Heart left ventricle (tissue), 16 donors: ENCODE measurements at regions of chr9 and their contacts with region 1.

Region 1: DNA sequence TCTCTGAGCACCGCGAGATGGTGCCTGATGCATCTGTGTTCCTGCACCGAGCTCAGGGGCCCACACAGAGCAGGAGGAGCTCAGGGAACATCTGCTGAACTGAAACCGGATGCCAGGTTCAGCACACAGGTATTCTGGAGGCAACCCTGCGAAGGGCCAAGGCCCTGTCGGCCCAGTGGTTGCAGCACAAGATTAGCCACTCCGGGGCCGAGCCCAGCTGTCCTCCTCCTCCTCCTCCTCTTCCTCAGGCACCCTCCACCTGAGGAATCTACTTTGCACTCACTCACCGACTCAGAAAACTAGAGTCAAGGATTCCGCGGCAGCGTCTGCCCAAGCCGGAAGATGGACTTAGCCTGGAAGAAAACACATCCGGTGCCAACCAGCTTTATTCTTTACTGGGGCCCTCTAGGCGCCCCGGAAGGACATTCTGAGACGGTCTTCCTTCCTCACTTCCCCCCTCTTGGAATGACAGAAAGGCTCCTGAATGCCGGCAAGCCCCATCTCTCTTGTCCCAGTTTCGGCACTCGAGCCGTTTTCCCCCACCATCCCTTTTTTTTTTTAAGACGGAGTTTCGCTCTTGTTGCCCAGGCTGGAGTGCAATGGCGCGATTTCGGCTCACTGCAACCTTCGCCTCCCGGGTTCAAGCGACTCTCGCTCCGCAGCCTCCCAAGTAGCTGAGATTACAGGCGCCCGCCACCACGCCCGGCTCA is at the start of gene ZBTB6:
- DNase-seq: peak; percentile 66 to 83 (median 78)
- ATAC-seq: peak; percentile 94 to 99 (median 98)
- H3K4me3 ChIP-seq: peak within 1 kb of the TSS; percentile 49 to 94 (median 84)
- H3K27ac ChIP-seq: peak within 1 kb of the TSS in 11 of 12 donors; percentile 75 to 94 (median 80)
- H3K4me1 ChIP-seq: peaks cover 0 to 16% (median 8%) of the 10 kb centered on the region in 12 donors
- H3K27me3 ChIP-seq: no peaks in the 10 kb centered on the region
- CTCF ChIP-seq: no peak
- POLR2A ChIP-seq: peak in 1 of 2 donors; percentile 37
- total RNA-seq, gene ZBTB6: 5.1 to 8.1 (median 6.3) TPM

Region 2: GRCh38 chr9:122931226-122932121 is 18.4 kb after region 1 on chr9 and contains the start of gene ZBTB26:
- intact Hi-C with region 1: loop called in 1 of 10 experiments (anchors 1 kb)
- DNase-seq: peak; percentile 94 to 97 (median 96)
- ATAC-seq: peak; percentile 99
- H3K4me3 ChIP-seq: peak within 1 kb of the TSS; percentile 63 to 99 (median 80)
- H3K27ac ChIP-seq: peak within 1 kb of the TSS; percentile 70 to 94 (median 90)
- H3K4me1 ChIP-seq: peaks cover 3 to 42% (median 32%) of the 10 kb centered on the region in 12 donors
- H3K27me3 ChIP-seq: no peaks in the 10 kb centered on the region
- CTCF ChIP-seq: no peak
- POLR2A ChIP-seq: peak in 1 of 2 donors; percentile 71
- total RNA-seq, gene ZBTB26: 2.3 to 6.1 (median 3.7) TPM

Region 3: GRCh38 chr9:122949696-122950095 is 36.6 kb after region 1 on chr9:
- intact Hi-C with region 1: loop called in 2 of 10 experiments (anchors 5 kb)
- DNase-seq: no peak
- ATAC-seq: no peak
- H3K4me3 ChIP-seq: no peak overlapping the region
- H3K27ac ChIP-seq: no peak overlapping the region
- H3K4me1 ChIP-seq: peaks cover 0 to 62% (median 38%) of the 10 kb centered on the region in 12 donors
- H3K27me3 ChIP-seq: no peaks in the 10 kb centered on the region
- CTCF ChIP-seq: no peak
- POLR2A ChIP-seq: no peak